HepG2 (cell line): ENCODE measurements at regions of chr5 and their contacts with region 1.

Region 1: GRCh38 chr5:155313518-155313917 is 300.0 kb downstream of the KIF4B start:
- DNase-seq: no peak
- ATAC-seq: no peak
- H3K4me3 ChIP-seq: no peak overlapping the region
- H3K27ac ChIP-seq: no peak overlapping the region
- H3K4me1 ChIP-seq: no peaks in the 10 kb centered on the region
- H3K27me3 ChIP-seq: no peaks in the 10 kb centered on the region
- CTCF ChIP-seq: no peak
- EP300 ChIP-seq: no peak
- POLR2A ChIP-seq: no peak
- RAD21 ChIP-seq: no peak

Region 2: DNA sequence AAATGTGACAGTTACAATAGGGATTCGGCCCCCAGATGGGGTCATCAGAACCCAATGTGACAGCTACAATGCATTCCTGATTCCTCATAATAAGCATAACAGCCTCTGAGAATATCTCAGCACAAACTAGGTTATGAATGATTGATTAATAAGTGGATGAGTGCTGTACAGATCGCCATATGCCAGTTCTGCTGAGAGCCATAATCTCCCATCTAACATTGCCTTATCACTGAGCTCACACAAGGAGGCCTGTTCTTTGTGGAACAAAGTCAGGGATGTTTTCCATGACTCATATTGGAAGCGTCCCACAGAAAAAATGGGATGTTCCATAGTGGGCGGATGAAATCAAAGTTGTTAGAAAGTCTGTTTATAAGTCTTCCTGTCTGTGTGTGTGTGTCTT is 210.4 kb before region 1 on chr5:
- CTCF ChIA-PET with region 1: no interaction called
- POLR2A ChIA-PET with region 1: no interaction called
- in situ Hi-C with region 1: no loop called
- intact Hi-C with region 1: no loop called
- DNase-seq: no peak
- ATAC-seq: no peak
- H3K4me3 ChIP-seq: no peak overlapping the region
- H3K27ac ChIP-seq: no peak overlapping the region
- H3K4me1 ChIP-seq: no peaks in the 10 kb centered on the region
- H3K27me3 ChIP-seq: peaks cover 4 to 39% of the 10 kb centered on the region in 2 experiments; a peak in 3 of 5 replicates
- CTCF ChIP-seq: no peak
- EP300 ChIP-seq: no peak
- POLR2A ChIP-seq: no peak
- RAD21 ChIP-seq: no peak

Region 3: DNA sequence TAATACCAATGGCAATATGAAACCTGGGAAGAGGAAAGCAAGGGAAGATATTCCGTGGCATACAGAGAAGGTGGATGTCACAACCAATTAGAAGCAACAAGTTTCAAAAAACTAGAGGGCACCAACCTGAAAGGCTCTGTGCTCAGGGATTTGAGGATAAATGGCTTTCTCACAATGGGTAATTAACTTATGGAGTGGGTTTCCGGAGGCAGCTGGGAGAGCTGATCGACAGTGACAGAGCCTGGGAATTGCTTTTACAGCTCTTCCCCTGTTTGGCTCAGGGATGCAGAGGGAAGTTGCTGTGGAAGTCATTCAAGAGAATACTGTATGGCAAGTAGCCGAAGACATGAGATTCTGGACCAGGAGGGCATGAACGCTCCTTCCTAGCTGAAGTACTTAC is 62.9 kb before region 1 on chr5:
- CTCF ChIA-PET with region 1: no interaction called
- POLR2A ChIA-PET with region 1: no interaction called
- in situ Hi-C with region 1: no loop called
- intact Hi-C with region 1: no loop called
- DNase-seq: no peak
- ATAC-seq: no peak
- H3K4me3 ChIP-seq: no peak overlapping the region
- H3K27ac ChIP-seq: no peak overlapping the region
- H3K4me1 ChIP-seq: no peaks in the 10 kb centered on the region
- H3K27me3 ChIP-seq: no peaks in the 10 kb centered on the region
- CTCF ChIP-seq: no peak
- EP300 ChIP-seq: no peak
- POLR2A ChIP-seq: no peak
- RAD21 ChIP-seq: no peak

Region 4: GRCh38 chr5:155532621-155533311 is 219.2 kb after region 1 on chr5:
- CTCF ChIA-PET with region 1: no interaction called
- POLR2A ChIA-PET with region 1: no interaction called
- in situ Hi-C with region 1: no loop called
- intact Hi-C with region 1: no loop called
- DNase-seq: no peak
- ATAC-seq: no peak
- H3K4me3 ChIP-seq: no peak overlapping the region
- H3K27ac ChIP-seq: no peak overlapping the region
- H3K4me1 ChIP-seq: no peaks in the 10 kb centered on the region
- H3K27me3 ChIP-seq: no peaks in the 10 kb centered on the region
- CTCF ChIP-seq: no peak
- EP300 ChIP-seq: no peak
- POLR2A ChIP-seq: no peak
- RAD21 ChIP-seq: no peak

Region 5: GRCh38 chr5:156947796-156948324 is 1634.3 kb after region 1 on chr5:
- CTCF ChIA-PET with region 1: no interaction called
- POLR2A ChIA-PET with region 1: no interaction called
- in situ Hi-C with region 1: no loop called
- intact Hi-C with region 1: loop called (anchors 5 kb)
- DNase-seq: no peak
- ATAC-seq: no peak
- H3K4me3 ChIP-seq: no peak overlapping the region
- H3K27ac ChIP-seq: no peak overlapping the region
- H3K4me1 ChIP-seq: peaks cover 5% of the 10 kb centered on the region; the same call in 1 of the 2 replicates
- H3K27me3 ChIP-seq: no peaks in the 10 kb centered on the region
- CTCF ChIP-seq: no peak
- EP300 ChIP-seq: no peak
- POLR2A ChIP-seq: no peak
- RAD21 ChIP-seq: no peak